ENCODE measurements at regions of chr9 and their contacts with region 1.

Region 1: DNA sequence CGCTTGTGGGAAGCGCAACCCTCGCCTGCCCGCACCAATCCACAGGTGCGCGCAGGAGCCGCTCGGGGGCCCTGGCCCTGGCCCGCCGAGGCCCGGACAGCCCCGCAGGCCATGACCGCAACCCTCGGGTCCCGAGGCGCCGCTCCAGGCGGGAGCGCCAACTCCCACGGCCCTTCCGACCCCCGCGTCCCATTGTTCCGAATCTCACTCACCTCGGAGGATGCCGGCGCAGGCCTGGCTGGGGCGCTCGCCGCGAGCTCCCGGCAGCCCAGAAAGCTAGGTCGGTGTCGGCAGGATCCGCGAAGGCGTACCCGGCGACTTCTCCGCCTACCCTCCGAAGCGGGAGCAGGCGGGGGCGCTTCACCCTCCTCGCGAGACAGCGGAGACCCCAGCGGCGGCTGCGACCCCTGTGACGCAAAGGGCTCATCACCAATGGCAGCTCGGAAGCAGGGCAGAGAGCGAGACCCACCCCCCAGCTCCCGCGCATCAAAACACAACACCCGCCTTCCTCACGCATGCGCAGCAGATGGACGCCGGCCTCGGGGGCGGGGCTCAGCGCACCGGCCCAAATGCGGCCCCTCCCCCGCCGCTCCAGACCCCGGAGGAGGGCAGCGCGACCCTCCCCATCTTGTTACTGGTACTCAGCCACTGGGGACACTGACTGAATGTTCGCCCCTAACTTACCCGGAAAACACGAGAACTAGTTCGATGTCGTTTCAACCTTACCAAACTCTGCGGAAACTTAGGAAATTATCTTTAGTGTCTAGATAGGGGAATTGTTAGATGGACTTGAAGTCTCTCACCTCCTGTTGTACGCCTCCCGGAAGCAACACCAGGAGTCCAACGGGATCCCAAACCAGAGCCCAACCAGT is 1.3 kb upstream of the SMIM27 start:
- DNase-seq: peak; percentile 83 to 84
- ATAC-seq: peak; percentile 68 to 83
- H3K4me3 ChIP-seq: peak overlapping the region; percentile 65 to 94 (median 84)
- H3K27ac ChIP-seq: peak overlapping the region; percentile 87 to 94 (median 91)
- H3K4me1 ChIP-seq: peaks cover 20 to 21% of the 10 kb centered on the region in 2 donors
- H3K27me3 ChIP-seq: no peaks in the 10 kb centered on the region
- CTCF ChIP-seq: no peak
- POLR2A ChIP-seq: peak; percentile 64 to 77

Region 2: DNA sequence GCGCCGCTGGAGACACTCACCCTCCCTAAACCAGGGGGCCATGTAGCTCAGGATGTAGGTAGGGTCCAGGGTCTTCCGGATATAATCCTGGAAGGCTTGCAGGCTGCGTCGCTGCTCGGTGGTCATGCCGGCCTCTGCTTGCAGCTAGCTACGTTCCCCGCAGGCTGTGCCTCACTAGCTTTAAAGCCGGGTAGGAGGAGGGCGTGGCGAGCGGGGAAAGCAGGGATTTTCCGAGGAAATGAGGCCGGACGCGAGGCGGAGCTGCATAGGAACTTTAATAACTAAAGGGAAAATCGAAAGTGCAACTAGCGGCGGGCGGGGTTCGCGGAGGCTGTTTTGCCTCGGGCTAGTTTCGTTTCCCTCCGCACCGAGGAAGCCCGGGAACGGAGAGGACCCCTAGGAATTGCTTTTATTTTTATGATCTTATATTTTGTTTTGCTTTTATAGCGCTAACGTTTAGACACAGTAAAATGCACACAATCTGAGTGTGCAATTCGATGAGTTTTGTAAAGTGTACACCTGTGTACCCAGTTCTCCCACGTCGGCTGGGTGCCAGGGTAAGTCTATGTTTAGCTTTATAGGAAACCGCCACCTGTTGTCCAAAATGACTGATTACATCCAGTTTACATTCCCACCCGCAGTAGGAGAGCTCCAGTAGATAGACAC is 24.6 kb before region 1 on chr9 and contains the start of gene RIGI:
- in situ Hi-C with region 1: no loop called
- intact Hi-C with region 1: loop called (anchors 1 kb)
- DNase-seq: peak; percentile 75 to 83
- ATAC-seq: peak; percentile 92 to 94
- H3K4me3 ChIP-seq: peak within 1 kb of the TSS; percentile 70 to 79 (median 74)
- H3K27ac ChIP-seq: peak within 1 kb of the TSS; percentile 79 to 84 (median 82)
- H3K4me1 ChIP-seq: peaks cover 31% of the 10 kb centered on the region in 2 donors
- H3K27me3 ChIP-seq: no peaks in the 10 kb centered on the region
- CTCF ChIP-seq: peak; percentile 17 to 58 (median 43)
- POLR2A ChIP-seq: peak; percentile 34 to 71
- total RNA-seq, gene RIGI: 1.6 to 3.3 (median 2.8) TPM

Region 3: GRCh38 chr9:34084562-34084961 is 1533.8 kb after region 1 on chr9:
- in situ Hi-C with region 1: no loop called
- intact Hi-C with region 1: loop called (anchors 5 kb)
- DNase-seq: peak; percentile 38 to 50
- ATAC-seq: peak; percentile 75 to 83
- H3K4me3 ChIP-seq: no peak overlapping the region
- H3K27ac ChIP-seq: peak overlapping the region; percentile 80 to 91 (median 89)
- H3K4me1 ChIP-seq: peaks cover 41 to 44% of the 10 kb centered on the region in 2 donors
- H3K27me3 ChIP-seq: no peaks in the 10 kb centered on the region
- CTCF ChIP-seq: no peak
- POLR2A ChIP-seq: no peak

Measured in gastrocnemius medialis (tissue), 4 donors.